ENCODE measurements at regions of chr17 and their contacts with region 1.

Region 1: DNA sequence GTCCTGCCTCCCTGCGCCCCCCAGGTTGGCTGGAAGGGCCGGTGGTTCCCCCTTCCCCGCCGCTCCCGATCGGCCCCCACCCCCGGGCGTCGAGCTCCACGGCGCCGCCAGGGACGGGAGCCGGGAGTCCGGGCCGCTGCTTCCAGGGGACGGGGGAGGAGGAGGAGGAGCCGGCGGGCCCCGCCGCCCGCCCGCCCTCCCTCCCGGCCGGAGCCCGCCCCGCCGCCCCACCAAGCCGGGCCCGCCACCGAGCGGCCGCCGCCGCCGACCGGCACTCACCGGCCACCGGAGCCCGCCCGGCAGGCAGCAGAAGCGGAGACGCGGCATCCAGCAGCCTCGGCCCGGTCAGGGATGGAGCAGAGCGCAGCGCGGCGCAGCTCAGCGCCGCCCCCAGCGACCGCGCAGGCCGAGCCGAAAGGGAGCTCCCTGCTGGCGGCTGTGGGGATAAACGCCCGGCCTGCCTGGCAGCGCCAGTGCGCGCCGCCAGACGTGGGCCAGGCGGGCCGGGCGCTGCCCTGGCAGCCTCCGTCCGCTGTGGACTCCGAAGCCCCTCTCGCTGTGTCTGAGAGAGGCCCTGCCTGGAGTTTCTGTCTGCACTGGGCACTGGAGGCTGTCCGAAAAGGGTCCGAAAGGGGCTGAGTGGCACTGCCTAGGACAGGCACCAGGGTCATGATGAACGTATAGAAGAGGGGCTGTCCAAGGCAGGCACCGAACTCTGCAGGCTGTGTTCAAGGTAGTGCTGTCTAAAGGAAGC is at the start of gene MYO18A:
- DNase-seq: peak; percentile 85
- ATAC-seq: peak; percentile 63
- H3K4me3 Mint-ChIP-seq: peak within 1 kb of the TSS; percentile 81
- H3K27ac Mint-ChIP-seq: peak within 1 kb of the TSS; percentile 93
- H3K4me1 Mint-ChIP-seq: peaks cover 32% of the 10 kb centered on the region
- H3K27me3 Mint-ChIP-seq: peaks cover 18% of the 10 kb centered on the region
- CTCF ChIP-seq: peak; percentile 74
- total RNA-seq, gene MYO18A: 38.5 to 54.9 TPM (median 42.5 TPM) in 3 replicates

Region 2: DNA sequence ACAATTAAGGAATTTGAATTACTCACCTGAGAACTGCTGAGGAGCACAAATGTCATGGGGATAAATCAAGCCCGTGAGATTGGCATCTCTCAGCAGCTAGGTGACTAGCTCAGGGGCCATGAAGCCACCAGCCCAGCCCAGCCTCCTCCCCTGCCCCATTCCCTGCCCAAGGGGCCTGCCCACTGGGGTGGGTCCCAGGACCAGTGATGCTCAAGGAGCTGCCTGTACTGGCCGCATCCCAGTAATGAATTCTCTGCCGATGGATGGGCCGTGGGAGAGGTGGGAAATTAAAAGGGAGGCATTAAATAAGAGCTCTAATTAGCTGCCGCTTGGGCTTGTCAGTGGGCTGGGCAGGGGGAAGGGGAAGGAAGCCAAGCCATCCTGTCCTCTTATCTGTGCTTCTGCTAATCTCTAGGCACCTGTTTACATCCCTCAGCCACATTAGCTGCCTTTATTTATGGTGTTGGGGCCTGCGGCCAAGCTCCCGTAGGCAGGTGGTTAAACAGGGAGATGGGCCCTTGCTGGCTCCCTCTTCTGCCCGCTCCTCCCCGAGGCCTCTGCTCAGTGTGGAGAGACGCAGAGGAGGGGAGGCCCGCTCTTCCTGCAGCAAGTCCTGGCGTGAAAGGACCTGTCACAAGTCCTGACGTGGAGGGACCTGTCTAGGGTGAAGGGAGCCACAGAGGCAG is 88.5 kb before region 1 on chr17:
- CTCF ChIA-PET with region 1: no interaction called
- POLR2A ChIA-PET with region 1: no interaction called
- DNase-seq: no peak
- ATAC-seq: no peak
- H3K4me3 Mint-ChIP-seq: no peak overlapping the region
- H3K27ac Mint-ChIP-seq: 0 out of 2 replicates have a peak overlapping the region, but pooled peaks have one; percentile 27
- H3K4me1 Mint-ChIP-seq: peaks cover 23% of the 10 kb centered on the region
- H3K27me3 Mint-ChIP-seq: no peaks in the 10 kb centered on the region
- CTCF ChIP-seq: no peak

Region 3: GRCh38 chr17:29133146-29133713 is 47.0 kb before region 1 on chr17:
- CTCF ChIA-PET with region 1: interaction called, 46 read pairs
- POLR2A ChIA-PET with region 1: no interaction called
- DNase-seq: no peak
- ATAC-seq: peak; percentile 83
- H3K4me3 Mint-ChIP-seq: no peak overlapping the region
- H3K27ac Mint-ChIP-seq: peak overlapping the region; percentile 30
- H3K4me1 Mint-ChIP-seq: peaks cover 27% of the 10 kb centered on the region
- H3K27me3 Mint-ChIP-seq: no peaks in the 10 kb centered on the region
- CTCF ChIP-seq: no peak

Region 4: DNA sequence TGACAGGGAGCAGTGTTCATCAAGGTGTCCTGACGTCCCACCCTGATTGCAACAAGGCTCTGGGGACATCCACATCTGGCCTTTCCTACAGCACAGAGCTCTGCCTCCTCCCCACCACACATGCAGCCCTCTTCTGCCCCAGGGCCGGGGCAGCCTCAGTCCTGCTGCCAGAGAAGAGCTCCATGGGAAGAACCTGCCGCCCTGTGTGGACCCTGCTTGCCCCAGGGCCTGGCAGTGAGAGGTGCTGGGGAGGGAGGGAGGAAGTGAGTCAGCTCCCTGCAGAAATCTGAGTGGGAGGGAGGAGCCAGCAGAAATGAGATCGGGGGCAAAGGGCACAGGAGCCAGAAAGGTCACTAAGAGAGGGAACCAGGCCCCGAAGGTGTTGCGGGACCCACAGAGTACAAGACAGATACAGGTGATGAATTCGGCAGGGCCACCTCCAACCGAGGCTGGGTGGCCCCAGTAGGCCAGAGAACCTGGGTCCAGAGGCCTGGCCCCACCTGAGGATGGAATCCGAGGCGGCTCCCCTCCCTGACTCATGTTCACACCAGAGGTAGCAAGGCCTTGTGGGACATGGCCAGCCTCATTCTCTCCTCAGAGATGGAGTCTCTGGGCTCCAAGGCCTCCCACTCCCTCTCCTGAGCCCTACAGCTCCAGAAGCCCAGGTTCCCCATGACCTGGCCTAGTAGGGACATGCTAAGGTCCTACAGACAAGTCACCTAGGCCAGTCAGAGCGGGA is 24.8 kb before region 1 on chr17:
- CTCF ChIA-PET with region 1: interaction called, 464 read pairs
- POLR2A ChIA-PET with region 1: interaction called, 5 read pairs
- DNase-seq: no peak
- ATAC-seq: peak; percentile 36
- H3K4me3 Mint-ChIP-seq: no peak overlapping the region
- H3K27ac Mint-ChIP-seq: peak overlapping the region; percentile 83
- H3K4me1 Mint-ChIP-seq: peaks cover 36% of the 10 kb centered on the region
- H3K27me3 Mint-ChIP-seq: no peaks in the 10 kb centered on the region
- CTCF ChIP-seq: no peak

Region 5: DNA sequence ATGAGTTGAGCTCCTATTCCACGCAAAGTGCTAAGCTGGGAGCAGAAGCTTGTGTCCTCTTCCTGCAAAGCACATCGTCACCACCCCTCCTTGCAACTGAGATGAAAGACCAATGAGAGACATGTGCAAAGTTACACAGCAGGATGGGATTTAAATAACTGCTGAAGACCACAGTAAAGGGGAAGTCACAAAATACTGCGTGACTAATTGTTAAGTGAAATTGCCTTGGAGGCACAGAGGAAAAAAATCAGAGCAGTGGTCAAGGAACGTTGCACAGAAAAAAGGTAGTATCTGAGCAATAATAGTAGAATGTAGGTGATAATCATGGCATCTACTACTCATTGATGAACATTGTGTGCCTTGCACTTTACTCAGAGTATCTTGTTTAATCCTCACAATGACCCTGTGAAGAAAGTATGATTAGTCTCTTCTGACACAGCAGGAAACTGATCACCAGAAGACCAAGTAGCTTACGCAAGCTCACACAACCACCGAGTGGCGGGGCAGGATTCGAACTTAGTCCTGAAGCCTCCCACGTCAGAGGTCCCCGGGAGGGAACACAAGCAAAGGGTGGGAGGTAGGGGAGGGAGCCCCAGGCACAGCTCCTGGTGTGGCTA is 15.4 kb after region 1 on chr17:
- CTCF ChIA-PET with region 1: interaction called, 29 read pairs
- POLR2A ChIA-PET with region 1: interaction called, 7 read pairs
- DNase-seq: no peak
- ATAC-seq: no peak
- H3K4me3 Mint-ChIP-seq: no peak overlapping the region
- H3K27ac Mint-ChIP-seq: no peak overlapping the region
- H3K4me1 Mint-ChIP-seq: peaks cover 6% of the 10 kb centered on the region; the same call in 1 of the 2 replicates
- H3K27me3 Mint-ChIP-seq: no peaks in the 10 kb centered on the region
- CTCF ChIP-seq: no peak

Region 6: GRCh38 chr17:29241015-29241963 is 61.1 kb after region 1 on chr17:
- CTCF ChIA-PET with region 1: interaction called, 10 read pairs
- POLR2A ChIA-PET with region 1: no interaction called
- DNase-seq: peak; percentile 24
- ATAC-seq: peak; percentile 79
- H3K4me3 Mint-ChIP-seq: no peak overlapping the region
- H3K27ac Mint-ChIP-seq: peak overlapping the region; percentile 35; the same call in 1 of the 2 replicates
- H3K4me1 Mint-ChIP-seq: peaks cover 27% of the 10 kb centered on the region
- H3K27me3 Mint-ChIP-seq: no peaks in the 10 kb centered on the region
- CTCF ChIP-seq: no peak

Measured in WTC11 (cell line).